Activated CD8-positive, alpha-beta T cell treated with anti-CD3 and anti-CD28 coated beads, Interleukin-2, amount 10 ng/mL, durations not matched to agents 7 days and 5 days (primary cell): ENCODE measurements at regions of chr5 and their contacts with region 1.

Region 1: DNA sequence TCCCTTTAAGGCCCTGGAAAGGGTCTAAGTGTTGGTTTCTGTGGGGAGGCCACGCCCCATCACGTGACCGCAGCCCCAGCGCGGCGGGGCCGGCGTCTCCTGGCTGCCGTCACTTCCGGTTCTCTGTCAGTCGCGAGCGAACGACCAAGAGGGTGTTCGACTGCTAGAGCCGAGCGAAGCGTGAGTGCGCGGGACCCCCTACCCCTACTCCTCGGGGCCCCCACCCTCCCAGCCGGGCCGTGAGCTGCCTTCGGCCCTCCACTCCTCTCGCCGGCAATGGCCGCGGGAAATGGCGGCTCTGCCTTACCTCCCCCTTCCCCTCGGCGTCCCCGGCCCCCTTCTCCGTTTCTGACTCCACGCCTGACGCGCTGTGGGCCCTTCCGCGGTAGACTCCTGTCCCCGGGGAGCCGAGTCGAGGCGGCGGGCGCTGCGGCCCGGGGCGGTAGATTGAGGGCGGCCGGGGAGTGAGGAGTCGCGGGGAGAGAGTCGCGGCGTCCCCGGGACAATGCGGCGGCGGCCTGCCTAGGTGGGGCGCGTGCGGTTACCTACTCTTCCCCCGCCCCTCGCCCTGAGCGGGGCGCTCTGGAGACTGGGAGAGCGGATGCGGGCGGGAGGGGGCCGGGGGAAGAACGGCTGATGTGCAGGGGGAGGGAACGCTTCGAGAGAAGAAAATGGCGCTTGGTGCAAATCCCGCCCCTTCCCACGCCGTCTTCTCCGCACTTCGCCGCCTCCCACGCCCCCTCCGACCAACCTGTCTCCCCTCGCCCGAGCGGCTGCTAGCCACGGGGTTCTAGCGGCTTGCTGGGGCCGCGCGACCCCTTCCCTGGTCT is at the start of gene SUB1:
- DNase-seq: peak; percentile 95
- ATAC-seq: peak; percentile 92
- H3K4me3 Mint-ChIP-seq: peak within 1 kb of the TSS; percentile 82
- H3K27ac Mint-ChIP-seq: peak within 1 kb of the TSS; percentile 88
- H3K4me1 Mint-ChIP-seq: peaks cover 62% of the 10 kb centered on the region
- H3K27me3 Mint-ChIP-seq: no peaks in the 10 kb centered on the region
- total RNA-seq, gene SUB1: 352 to 377 TPM

Region 2: GRCh38 chr5:32498484-32498883 is 87.2 kb before region 1 on chr5:
- CTCF ChIA-PET with region 1: interaction called, 10 read pairs
- POLR2A ChIA-PET with region 1: interaction called, 5 read pairs
- DNase-seq: no peak
- ATAC-seq: no peak
- H3K4me3 Mint-ChIP-seq: no peak overlapping the region
- H3K27ac Mint-ChIP-seq: no peak overlapping the region
- H3K4me1 Mint-ChIP-seq: no peaks in the 10 kb centered on the region
- H3K27me3 Mint-ChIP-seq: peaks cover 2% of the 10 kb centered on the region

Region 3: GRCh38 chr5:32531885-32532520 is 53.7 kb before region 1 on chr5:
- CTCF ChIA-PET with region 1: interaction called, 10 read pairs
- POLR2A ChIA-PET with region 1: interaction called, 8 read pairs
- DNase-seq: peak; percentile 38
- ATAC-seq: peak; percentile 86
- H3K4me3 Mint-ChIP-seq: peak overlapping the region; percentile 54
- H3K27ac Mint-ChIP-seq: peak overlapping the region; percentile 65
- H3K4me1 Mint-ChIP-seq: peaks cover 6% of the 10 kb centered on the region
- H3K27me3 Mint-ChIP-seq: no peaks in the 10 kb centered on the region

Region 4: DNA sequence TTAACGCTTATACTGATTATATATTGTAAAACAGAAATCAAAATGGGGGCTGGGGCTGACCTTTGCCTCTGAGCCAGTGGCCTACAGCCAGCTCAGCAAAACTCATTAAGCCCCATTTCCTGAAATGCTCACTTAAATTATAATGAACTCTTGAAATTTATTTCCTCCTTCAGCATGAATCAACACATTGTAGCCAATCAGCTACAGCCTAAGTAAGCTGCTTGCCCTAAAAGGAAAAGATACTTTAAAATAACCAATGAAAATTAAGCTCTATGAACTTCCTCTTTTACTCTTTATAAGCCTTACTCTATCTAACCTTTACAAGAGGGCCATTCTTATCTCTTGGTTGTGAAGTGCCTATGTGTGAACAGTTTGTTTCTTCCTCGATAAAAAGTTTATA is 33.8 kb before region 1 on chr5:
- CTCF ChIA-PET with region 1: interaction called, 10 read pairs
- POLR2A ChIA-PET with region 1: no interaction called
- DNase-seq: no peak
- ATAC-seq: no peak
- H3K4me3 Mint-ChIP-seq: no peak overlapping the region
- H3K27ac Mint-ChIP-seq: no peak overlapping the region
- H3K4me1 Mint-ChIP-seq: no peaks in the 10 kb centered on the region
- H3K27me3 Mint-ChIP-seq: no peaks in the 10 kb centered on the region

Region 5: DNA sequence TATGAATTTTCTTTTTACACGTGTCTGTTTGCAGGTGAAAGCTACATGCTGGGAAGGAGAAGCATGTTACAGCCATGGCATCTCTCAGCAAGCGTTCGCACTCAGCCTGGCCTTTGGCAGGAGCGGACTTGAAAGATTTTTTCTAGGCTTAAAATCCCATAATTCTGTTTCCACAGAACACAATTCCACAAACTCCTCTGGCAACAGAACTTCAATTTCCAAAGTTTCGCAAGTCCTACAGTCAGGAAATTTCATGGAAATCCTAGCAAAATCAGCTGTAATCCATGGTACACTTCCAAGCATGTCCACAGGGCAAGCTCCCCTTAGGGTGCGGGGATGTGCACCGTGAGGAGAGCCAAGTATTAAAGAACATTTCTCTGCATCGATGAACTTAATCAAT is 35.6 kb after region 1 on chr5:
- CTCF ChIA-PET with region 1: no interaction called
- POLR2A ChIA-PET with region 1: no interaction called
- DNase-seq: no peak
- ATAC-seq: no peak
- H3K4me3 Mint-ChIP-seq: no peak overlapping the region
- H3K27ac Mint-ChIP-seq: no peak overlapping the region
- H3K4me1 Mint-ChIP-seq: no peaks in the 10 kb centered on the region
- H3K27me3 Mint-ChIP-seq: no peaks in the 10 kb centered on the region